ENCODE measurements at regions of chr1 and their contacts with region 1.

Region 1: DNA sequence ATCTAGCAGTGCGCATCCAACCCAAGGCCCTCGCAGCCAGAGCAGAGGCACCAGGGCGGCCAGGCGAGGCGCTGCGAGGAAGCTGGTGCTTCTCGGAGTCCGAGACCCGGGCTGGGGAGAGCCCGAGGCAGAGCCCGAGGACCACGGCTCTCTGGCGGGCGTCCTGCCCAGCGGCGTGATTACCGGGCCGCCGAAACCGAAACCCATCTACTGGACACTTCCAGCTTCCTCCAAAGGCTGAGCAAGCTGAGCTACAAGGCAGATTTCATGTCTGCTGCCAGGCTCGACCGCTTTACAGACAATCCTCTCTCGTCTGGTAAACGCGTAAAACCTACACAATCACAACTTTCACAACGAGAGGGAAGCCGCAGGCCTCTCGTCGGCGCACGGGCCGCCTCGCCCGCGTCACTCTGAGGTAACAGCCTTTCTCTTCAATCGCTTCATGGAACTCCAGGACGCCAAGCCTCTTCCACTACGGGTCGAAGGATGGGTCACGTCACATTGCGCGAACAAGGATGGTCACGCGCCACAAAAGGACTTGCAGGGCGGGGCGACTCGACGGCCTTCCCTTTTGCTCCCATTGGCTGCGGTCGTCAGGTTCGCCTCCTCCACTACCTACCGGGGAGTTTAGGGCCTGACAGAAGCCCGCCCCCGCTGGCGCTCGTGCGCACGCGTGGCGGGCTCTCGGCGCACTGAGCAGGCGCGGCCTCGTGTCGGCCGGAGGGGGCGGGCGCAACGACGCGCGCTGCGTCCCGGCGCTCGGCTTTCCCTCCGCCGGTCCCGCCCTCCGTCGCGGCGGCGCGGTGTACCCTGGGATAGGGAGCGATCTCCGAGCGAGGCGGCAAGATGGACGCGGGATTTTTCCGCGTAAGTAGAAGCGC is at the start of gene SRRM1:
- DNase-seq: peak; percentile 100
- H3K4me3 Mint-ChIP-seq: peak within 1 kb of the TSS; percentile 83
- H3K27ac Mint-ChIP-seq: peak within 1 kb of the TSS; percentile 98
- H3K4me1 Mint-ChIP-seq: peaks cover 48% of the 10 kb centered on the region
- H3K27me3 Mint-ChIP-seq: no peaks in the 10 kb centered on the region
- total RNA-seq, gene SRRM1: 226 to 235 TPM

Region 2: GRCh38 chr1:24491577-24492360 is 151.0 kb before region 1 on chr1:
- CTCF ChIA-PET with region 1: no interaction called
- intact Hi-C with region 1: loop called (anchors 2 kb)
- DNase-seq: no peak
- H3K4me3 Mint-ChIP-seq: no peak overlapping the region
- H3K27ac Mint-ChIP-seq: no peak overlapping the region
- H3K4me1 Mint-ChIP-seq: peaks cover 50% of the 10 kb centered on the region
- H3K27me3 Mint-ChIP-seq: no peaks in the 10 kb centered on the region

Region 3: DNA sequence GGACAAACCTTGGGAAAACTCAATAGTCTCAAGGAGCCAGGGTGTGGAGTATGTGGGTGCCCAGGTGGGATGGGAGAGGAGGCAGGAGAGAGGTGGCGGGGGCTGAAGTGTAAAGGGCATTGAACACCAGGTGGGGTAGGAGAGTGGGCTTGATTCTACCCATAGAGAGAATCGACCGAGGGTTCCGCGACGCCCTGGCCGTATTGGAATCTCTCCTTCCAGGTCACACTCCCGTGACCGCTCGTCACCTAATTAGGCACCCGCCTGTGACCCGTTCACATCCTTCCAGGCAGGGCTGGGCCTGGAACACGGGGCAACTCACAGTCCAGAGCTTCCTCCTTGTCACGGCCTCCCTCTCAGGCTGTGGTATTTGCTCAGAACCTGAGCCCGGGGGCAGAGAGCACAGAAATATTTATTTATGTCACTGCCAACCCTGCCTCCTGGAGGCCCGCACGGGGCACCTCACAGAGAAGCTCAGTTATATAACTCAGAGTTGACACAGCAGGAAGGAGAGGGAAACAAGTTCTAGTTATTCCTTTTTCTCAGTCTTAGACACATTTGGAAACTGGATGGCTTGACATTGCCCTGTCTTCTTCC is 74.8 kb before region 1 on chr1:
- CTCF ChIA-PET with region 1: no interaction called
- intact Hi-C with region 1: no loop called
- DNase-seq: peak; percentile 16
- H3K4me3 Mint-ChIP-seq: no peak overlapping the region
- H3K27ac Mint-ChIP-seq: no peak overlapping the region
- H3K4me1 Mint-ChIP-seq: peaks cover 11% of the 10 kb centered on the region
- H3K27me3 Mint-ChIP-seq: no peaks in the 10 kb centered on the region

Region 4: DNA sequence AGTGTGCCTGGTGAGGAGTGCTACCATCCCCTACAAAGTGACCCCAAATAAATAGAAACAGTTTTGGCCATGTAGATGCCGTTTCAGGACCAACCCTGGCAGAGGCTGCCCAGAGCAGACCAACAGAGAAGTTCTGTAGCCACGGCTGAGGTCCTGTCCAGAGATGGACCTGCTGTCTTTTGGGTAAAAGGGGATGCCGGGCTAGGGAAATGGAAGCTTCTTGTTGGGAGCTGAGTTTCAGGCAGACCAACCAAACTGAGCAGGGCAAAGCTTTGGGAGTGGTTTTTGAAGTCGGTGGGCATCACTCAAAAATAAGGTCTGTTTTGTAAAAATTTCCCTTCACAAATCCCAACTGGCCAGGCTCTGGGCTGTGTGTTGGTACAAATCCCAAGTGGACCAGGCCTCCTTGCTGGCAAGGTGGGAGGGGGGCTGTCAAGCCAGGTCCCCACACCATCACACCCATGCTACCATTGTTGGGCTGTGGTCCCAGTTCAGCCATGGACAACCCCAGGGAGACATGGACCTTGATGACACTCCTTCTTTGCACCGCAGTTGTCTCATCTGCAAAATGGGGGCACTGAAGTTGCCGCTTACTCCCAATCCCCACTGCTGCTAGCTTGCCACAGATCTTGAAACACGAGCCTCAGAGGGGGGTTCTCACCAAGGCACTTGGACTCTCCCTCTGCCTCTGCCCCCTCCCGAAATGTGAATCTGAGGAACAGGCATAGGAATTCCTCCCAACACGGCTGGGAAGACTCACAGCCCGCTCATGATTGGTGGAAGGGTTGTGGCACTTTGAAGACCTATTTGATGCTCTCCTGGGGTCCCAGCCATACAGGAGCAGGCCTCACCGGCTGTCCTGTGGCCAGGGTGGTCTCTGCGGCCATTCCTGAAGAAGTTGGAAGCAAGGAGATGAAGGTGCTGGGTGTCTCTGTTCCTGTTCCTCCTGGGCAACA is 256.0 kb after region 1 on chr1:
- CTCF ChIA-PET with region 1: no interaction called
- intact Hi-C with region 1: no loop called
- DNase-seq: peak; percentile 25
- H3K4me3 Mint-ChIP-seq: no peak overlapping the region
- H3K27ac Mint-ChIP-seq: peak overlapping the region; percentile 46
- H3K4me1 Mint-ChIP-seq: peaks cover 23% of the 10 kb centered on the region
- H3K27me3 Mint-ChIP-seq: no peaks in the 10 kb centered on the region

Region 5: GRCh38 chr1:26345718-26346549 is 1703.2 kb after region 1 on chr1:
- CTCF ChIA-PET with region 1: no interaction called
- intact Hi-C with region 1: no loop called
- DNase-seq: no peak
- H3K4me3 Mint-ChIP-seq: no peak overlapping the region
- H3K27ac Mint-ChIP-seq: no peak overlapping the region
- H3K4me1 Mint-ChIP-seq: no peaks in the 10 kb centered on the region
- H3K27me3 Mint-ChIP-seq: no peaks in the 10 kb centered on the region

Measured in activated naive CD4-positive, alpha-beta T cell treated with anti-CD3 and anti-CD28 coated beads for 36 hours (primary cell).